ENCODE measurements at regions of chr7 and their contacts with region 1.

Region 1: DNA sequence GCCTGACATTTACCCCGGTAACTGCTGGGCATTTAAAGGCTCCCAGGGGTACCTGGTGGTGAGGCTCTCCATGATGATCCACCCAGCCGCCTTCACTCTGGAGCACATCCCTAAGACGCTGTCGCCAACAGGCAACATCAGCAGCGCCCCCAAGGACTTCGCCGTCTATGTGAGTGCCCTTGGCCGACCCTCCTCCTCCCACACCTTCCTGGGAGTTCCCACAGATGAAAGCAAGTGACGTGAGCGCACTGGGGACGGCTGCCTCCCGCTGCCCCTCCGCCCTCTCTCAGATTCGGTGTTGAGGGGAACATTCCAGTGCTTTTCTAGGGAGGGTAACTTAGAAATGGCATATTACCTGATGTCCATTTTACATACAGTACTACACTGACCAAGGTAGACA is 7.0 kb upstream of the GET4 start:
- DNase-seq: no peak
- H3K4me3 Mint-ChIP-seq: no peak overlapping the region
- H3K27ac Mint-ChIP-seq: peak overlapping the region; percentile 46
- H3K4me1 Mint-ChIP-seq: peaks cover 30% of the 10 kb centered on the region
- H3K27me3 Mint-ChIP-seq: no peaks in the 10 kb centered on the region

Region 2: GRCh38 chr7:531777-532176 is 337.6 kb before region 1 on chr7:
- CTCF ChIA-PET with region 1: interaction called, 10 read pairs
- intact Hi-C with region 1: no loop called
- DNase-seq: no peak
- H3K4me3 Mint-ChIP-seq: no peak overlapping the region
- H3K27ac Mint-ChIP-seq: no peak overlapping the region
- H3K4me1 Mint-ChIP-seq: peaks cover 2% of the 10 kb centered on the region
- H3K27me3 Mint-ChIP-seq: peaks cover 3% of the 10 kb centered on the region

Region 3: DNA sequence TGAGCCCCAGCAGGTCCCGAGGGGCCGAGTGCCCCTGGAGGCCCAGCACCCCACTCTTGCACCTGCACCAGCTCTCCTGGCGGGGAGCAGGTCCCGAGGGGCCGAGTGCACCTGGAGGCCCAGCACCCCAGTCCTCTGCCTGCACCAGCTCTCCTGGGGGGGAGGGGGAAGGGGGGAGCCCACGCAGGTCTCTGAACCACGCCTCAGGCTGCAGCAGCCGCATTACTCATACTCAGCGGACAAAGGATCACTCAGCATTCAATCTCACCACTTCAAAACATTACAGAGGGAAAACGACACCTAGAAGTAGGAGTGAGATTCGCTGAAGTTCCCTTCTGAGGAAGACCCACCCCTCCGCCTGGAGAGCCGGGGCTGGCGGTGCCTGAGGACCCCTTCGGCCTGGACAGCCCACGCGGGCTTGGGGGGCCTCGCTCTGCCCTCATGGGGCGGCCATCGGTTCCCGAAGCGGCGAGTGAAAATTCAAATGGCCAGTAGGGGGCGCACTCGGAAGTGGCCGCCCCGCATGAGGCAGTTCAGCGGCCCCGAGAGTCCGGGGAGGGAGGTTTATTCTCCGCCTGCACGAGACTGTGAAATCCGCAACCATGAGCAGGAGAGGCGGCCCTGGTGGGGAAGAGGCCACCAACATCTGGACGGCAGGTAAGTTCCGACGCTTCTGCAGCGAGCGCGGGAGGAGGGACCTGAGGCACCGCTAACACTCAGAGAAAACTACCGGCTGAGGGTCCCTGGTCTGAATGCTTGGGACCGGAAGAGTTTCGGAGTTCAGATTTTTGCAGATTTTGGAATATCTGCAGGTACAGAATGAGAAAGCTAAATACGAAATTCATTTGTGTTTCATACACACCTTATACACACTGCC is 217.5 kb after region 1 on chr7:
- CTCF ChIA-PET with region 1: no interaction called
- intact Hi-C with region 1: no loop called
- DNase-seq: peak; percentile 80
- H3K4me3 Mint-ChIP-seq: peak overlapping the region; percentile 38
- H3K27ac Mint-ChIP-seq: no peak overlapping the region
- H3K4me1 Mint-ChIP-seq: peaks cover 12% of the 10 kb centered on the region
- H3K27me3 Mint-ChIP-seq: no peaks in the 10 kb centered on the region